Calu3 (cell line): ENCODE measurements at regions of chr1 and their contacts with region 1.

Region 1: DNA sequence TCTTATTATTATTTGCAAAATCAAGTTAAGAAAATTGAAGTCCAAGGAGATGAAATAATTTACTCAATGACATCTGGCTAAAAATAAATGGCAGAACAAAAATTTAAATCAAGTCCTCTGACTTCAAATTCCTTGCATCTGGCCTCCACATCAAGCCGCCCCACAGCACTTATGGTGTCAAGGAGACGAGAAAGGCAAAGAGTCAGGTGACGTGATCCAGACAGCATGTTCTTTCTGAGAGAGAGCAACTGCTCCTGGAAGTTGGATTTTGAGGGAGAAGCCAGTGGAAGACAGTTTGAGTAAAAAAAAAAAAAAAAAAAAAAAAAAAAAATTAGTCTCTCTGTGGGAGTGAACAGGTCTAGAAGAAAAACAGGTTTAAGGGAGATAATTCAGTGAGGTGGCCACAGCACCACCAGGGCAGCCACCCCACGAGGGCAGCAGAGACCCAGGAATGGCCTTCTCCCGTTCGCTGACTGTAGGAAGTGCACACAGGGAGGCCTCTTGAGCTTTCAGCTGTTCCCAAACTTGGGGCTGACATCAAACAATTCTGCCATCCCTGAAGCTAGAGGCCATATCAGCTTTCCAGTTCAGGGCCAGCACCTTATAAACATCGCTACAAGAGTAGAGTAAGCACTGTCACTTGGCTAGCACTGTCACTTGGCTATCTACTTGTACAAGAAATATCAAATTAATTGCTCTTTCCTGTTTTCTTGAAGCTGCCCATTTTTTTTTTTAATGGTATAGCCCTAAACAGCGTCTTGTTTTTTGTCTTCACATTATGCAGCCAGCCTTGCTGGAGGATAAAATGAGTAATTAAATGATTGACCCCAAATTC is 7.8 kb downstream of the C1orf162 start:
- DNase-seq: peak; percentile 69
- H3K4me3 Mint-ChIP-seq: no peak overlapping the region
- H3K27ac Mint-ChIP-seq: no peak overlapping the region
- H3K4me1 Mint-ChIP-seq: no peaks in the 10 kb centered on the region
- H3K27me3 Mint-ChIP-seq: no peaks in the 10 kb centered on the region
- CTCF ChIP-seq: peak; percentile 22

Region 2: DNA sequence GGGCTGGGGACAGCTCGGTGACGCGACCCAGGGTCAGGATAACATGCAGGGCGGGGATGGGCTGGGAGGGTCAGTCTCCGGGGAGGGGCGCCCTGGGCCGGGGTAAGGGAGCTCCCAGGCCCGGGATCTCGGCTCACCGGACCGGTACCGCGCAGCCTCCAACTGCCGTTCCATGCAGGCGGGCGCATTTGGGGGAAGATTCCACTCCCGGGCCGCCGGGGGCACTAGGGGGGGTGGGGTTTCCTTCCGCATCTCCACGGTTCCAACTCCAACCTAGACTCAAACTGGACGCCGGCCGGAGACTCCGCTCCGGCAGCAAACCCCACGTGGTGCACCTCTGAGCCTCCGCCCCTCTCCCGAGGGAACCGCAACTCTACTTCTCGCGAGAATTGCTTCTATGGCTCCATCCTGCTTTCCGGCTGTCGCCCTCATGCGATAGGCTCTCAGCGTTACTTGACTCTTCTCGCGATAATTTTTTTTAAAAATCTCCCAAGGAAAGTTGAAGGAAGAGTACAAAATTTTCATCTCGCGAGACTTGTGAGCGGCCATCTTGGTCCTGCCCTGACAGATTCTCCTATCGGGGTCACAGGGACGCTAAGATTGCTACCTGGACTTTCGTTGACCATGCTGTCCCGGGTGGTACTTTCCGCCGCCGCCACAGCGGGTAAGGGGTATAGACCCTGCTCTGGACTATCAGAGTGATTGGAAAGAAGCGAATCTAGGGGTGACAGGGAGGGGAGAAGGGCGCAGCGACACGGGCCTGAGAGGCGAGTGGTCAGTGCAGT is 32.5 kb before region 1 on chr1 and contains the starts of genes ATP5PB and WDR77:
- CTCF ChIA-PET with region 1: no interaction called
- intact Hi-C with region 1: no loop called
- DNase-seq: peak; percentile 88
- H3K4me3 Mint-ChIP-seq: peak within 1 kb of the TSS; percentile 96
- H3K27ac Mint-ChIP-seq: peak within 1 kb of the TSS; percentile 96
- H3K4me1 Mint-ChIP-seq: peaks cover 32% of the 10 kb centered on the region
- H3K27me3 Mint-ChIP-seq: no peaks in the 10 kb centered on the region
- CTCF ChIP-seq: no peak
- total RNA-seq, gene ATP5PB: 149 and 157 TPM in 2 replicates
- total RNA-seq, gene WDR77: 27.7 and 28.4 TPM in 2 replicates

Region 3: GRCh38 chr1:111656086-111657017 is 174.7 kb after region 1 on chr1:
- CTCF ChIA-PET with region 1: no interaction called
- intact Hi-C with region 1: loop called (anchors 2 kb)
- DNase-seq: peak; percentile 9
- H3K4me3 Mint-ChIP-seq: no peak overlapping the region
- H3K27ac Mint-ChIP-seq: peak overlapping the region; percentile 72
- H3K4me1 Mint-ChIP-seq: peaks cover 9% of the 10 kb centered on the region
- H3K27me3 Mint-ChIP-seq: no peaks in the 10 kb centered on the region
- CTCF ChIP-seq: peak; percentile 35

Region 4: GRCh38 chr1:111747282-111747734 is 265.7 kb after region 1 on chr1:
- CTCF ChIA-PET with region 1: interaction called, 6 read pairs
- intact Hi-C with region 1: loop called (anchors 5 kb)
- DNase-seq: peak; percentile 68
- H3K4me3 Mint-ChIP-seq: no peak overlapping the region
- H3K27ac Mint-ChIP-seq: no peak overlapping the region
- H3K4me1 Mint-ChIP-seq: no peaks in the 10 kb centered on the region
- H3K27me3 Mint-ChIP-seq: peaks cover 67% of the 10 kb centered on the region
- CTCF ChIP-seq: peak; percentile 53

Region 5: GRCh38 chr1:111769517-111770146 is 288.0 kb after region 1 on chr1:
- CTCF ChIA-PET with region 1: interaction called, 7 read pairs
- intact Hi-C with region 1: loop called (anchors 5 kb)
- DNase-seq: peak; percentile 17
- H3K4me3 Mint-ChIP-seq: no peak overlapping the region
- H3K27ac Mint-ChIP-seq: no peak overlapping the region
- H3K4me1 Mint-ChIP-seq: no peaks in the 10 kb centered on the region
- H3K27me3 Mint-ChIP-seq: no peaks in the 10 kb centered on the region
- CTCF ChIP-seq: peak; percentile 38

Region 6: GRCh38 chr1:112209488-112209887 is 727.9 kb after region 1 on chr1:
- CTCF ChIA-PET with region 1: no interaction called
- intact Hi-C with region 1: no loop called
- DNase-seq: no peak
- H3K4me3 Mint-ChIP-seq: no peak overlapping the region
- H3K27ac Mint-ChIP-seq: no peak overlapping the region
- H3K4me1 Mint-ChIP-seq: no peaks in the 10 kb centered on the region
- H3K27me3 Mint-ChIP-seq: peaks cover 41% of the 10 kb centered on the region
- CTCF ChIP-seq: no peak